Posterior vena cava (tissue), 2 donors: ENCODE measurements at regions of chr3 and their contacts with region 1.

Region 1: DNA sequence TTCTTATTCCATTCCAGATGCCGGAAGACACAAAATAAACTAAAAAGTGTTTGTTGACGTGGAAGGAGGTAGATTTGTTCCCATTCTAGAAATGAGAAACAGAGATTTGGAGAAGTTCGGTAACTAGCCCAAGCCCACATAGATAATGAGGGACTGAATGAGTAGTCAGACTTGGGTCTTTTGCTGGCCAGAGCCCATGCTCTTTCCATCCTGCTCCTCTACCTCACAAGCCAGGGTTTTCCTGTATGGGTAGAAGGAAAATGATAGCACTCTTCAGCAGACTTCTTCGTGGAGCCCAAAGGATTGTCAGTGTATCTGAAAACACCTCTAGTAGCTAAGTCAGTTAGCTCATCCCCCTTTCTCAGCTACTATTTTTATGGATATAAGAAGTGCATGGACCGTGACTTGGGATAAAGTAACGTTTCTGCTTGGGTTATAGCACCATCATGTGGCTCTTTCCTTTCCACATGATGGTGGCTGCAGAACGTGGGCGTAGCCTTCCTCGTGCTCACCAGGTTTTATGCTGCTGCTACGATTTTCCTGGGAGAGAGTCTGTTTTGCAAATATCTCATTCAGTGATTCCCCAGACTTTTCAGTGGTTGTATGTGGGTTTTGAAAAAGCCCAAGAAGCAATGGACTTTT is 84.6 kb downstream of the DGKG start:
- DNase-seq: no peak

Region 2: DNA sequence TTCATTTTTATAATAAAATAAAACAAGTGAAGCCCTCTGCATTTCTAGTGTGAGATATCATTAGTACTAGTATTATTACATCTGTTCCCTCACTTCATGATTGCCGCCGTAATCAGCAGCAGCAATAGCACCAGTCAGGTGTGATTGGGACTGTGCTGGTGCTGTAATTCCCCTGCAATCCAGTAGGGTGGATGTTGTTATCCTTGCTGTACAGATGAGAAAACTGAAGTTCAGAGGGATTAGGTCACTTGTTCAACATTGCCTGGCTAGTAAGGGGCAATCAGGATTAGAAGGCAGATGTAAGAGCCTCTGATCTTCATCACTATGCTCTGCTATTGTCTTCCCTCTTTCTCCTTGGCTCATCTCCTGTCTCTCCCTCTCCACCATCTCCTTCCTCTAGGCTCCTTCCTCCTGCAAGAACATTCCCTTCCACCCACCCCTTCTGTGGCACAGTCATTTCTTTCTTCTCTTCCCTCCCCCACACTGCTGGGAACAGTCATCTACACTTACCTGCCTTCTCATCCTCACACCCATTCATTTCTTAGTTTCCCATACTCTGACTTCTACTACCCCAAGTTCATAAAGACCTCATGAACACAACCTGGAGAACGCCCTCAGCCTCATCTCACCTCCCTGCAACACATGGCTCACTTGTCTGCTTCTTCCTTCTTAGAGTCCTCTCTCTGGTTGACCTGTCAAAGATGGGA is 237.1 kb after region 1 on chr3:
- intact Hi-C with region 1: loop called in 1 of 2 experiments (anchors 10 kb)
- DNase-seq: no peak

Region 3: GRCh38 chr3:187264021-187264420 is 986.6 kb after region 1 on chr3:
- intact Hi-C with region 1: loop called in 1 of 2 experiments (anchors 10 kb)
- DNase-seq: no peak